ENCODE measurements at regions of chr3 and their contacts with region 1.

Region 1: GRCh38 chr3:49079270-49079669 is 14.6 kb downstream of the QRICH1 start:
- DNase-seq: no peak

Region 2: GRCh38 chr3:49053543-49053942 is 25.7 kb before region 1 on chr3:
- intact Hi-C with region 1: loop called in 1 of 2 experiments (anchors 1 kb)
- DNase-seq: no peak

Measured in posterior vena cava (tissue), 2 donors.